Right ventricle myocardium superior (tissue), 1 donor: ENCODE measurements at regions of chr9 and their contacts with region 1.

Region 1: GRCh38 chr9:28267351-28267750 is 694.1 kb upstream of the C9orf72 start:
- DNase-seq: no peak
- ATAC-seq: no peak

Region 2: DNA sequence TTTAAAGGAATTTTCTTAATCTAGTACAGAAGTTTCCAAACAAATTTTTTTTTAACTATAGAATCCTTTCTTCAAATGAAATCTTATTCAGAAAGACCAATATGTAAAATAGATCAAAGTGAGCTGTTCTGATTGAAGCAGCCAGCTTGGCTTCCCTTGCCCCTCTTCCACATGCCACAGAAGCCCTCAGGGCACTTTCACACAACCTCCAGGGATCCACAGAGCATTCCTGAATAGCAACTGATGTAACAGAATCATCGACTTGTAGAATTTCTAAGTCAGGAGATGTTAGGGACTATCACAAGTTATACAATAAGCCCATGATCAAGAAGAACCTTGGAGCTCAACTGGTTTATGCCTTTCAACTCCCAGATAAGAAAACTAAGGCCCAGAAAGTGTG is 266.3 kb before region 1 on chr9:
- intact Hi-C with region 1: no loop called
- DNase-seq: no peak
- ATAC-seq: no peak

Region 3: GRCh38 chr9:28317745-28318144 is 50.4 kb after region 1 on chr9:
- intact Hi-C with region 1: loop called (anchors 5 kb)
- DNase-seq: no peak
- ATAC-seq: no peak